H1 (cell line): ENCODE measurements at regions of chr3 and their contacts with region 1.

Region 1: DNA sequence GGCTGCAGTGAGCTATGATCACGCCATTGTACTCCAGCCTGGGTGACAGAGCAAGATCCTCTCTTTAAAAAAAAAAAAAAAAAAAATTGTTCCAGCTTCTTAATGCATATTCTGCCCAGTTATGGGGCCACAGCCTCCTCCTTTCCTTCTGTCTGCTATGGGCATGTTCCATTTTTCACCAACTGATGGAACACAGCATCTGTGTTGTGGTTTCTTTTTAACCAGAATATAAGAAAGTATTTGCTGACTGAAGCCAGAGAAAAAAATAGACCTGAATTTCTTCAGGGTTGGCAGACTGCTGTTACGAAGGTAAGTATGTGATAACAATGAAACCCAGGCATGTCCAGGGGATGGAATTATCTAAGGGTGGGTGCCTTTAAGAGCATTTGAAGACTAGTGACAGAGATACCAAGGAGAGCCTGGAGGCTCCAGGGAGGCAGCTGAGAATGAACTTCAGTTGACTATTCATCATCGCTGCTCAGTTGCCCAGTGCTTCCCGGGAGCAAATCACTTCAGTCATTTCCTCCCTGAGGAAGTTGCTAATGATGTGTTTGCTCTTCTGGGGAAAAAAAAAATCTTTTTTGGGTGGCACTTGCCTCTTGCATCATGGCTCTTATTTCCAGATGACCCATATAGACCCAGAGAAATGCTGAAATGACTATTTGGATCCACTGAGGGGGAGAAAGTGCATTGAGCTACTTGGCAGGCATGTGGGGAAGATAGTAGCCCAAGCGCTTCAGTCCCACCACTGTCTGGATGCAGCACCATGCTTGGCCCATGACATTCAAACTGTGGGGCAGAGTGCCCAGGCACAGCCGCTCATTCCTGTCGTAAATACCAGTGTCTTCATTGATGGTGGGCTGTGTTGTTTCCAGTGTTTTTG is 14.5 kb downstream of the NCBP2 start:
- DNase-seq: no peak
- H3K4me3 ChIP-seq: no peak overlapping the region
- H3K27ac ChIP-seq: no peak overlapping the region
- H3K4me1 ChIP-seq: no peaks in the 10 kb centered on the region
- H3K27me3 ChIP-seq: no peaks in the 10 kb centered on the region
- CTCF ChIP-seq: no peak
- EP300 ChIP-seq: no peak
- POLR2A ChIP-seq: no peak
- RAD21 ChIP-seq: no peak

Region 2: GRCh38 chr3:196889844-196890708 is 37.7 kb before region 1 on chr3:
- CTCF ChIA-PET with region 1: no interaction called
- POLR2A ChIA-PET with region 1: no interaction called
- DNase-seq: no peak
- H3K4me3 ChIP-seq: no peak overlapping the region
- H3K27ac ChIP-seq: no peak overlapping the region
- H3K4me1 ChIP-seq: no peaks in the 10 kb centered on the region
- H3K27me3 ChIP-seq: no peaks in the 10 kb centered on the region
- CTCF ChIP-seq: no peak
- EP300 ChIP-seq: no peak
- POLR2A ChIP-seq: no peak
- RAD21 ChIP-seq: no peak

Region 3: GRCh38 chr3:196942226-196942914 is 14.6 kb after region 1 on chr3 and contains the start of gene NCBP2:
- CTCF ChIA-PET with region 1: interaction called, 3 read pairs
- POLR2A ChIA-PET with region 1: interaction called, 11 read pairs
- DNase-seq: peak; percentile 94 to 99
- H3K4me3 ChIP-seq: peak within 1 kb of the TSS; percentile 78 to 99 (median 89)
- H3K27ac ChIP-seq: peak within 1 kb of the TSS; percentile 87
- H3K4me1 ChIP-seq: peaks cover 3 to 8% (median 4%) of the 10 kb centered on the region in 4 experiments
- H3K27me3 ChIP-seq: no peaks in the 10 kb centered on the region
- CTCF ChIP-seq: peak; percentile 74 to 84 (median 79)
- EP300 ChIP-seq: no peak
- POLR2A ChIP-seq: peak; percentile 84 to 94
- RAD21 ChIP-seq: peak; percentile 51 to 59
- total RNA-seq, gene NCBP2: 96.7 and 100 TPM in 2 replicates

Region 4: DNA sequence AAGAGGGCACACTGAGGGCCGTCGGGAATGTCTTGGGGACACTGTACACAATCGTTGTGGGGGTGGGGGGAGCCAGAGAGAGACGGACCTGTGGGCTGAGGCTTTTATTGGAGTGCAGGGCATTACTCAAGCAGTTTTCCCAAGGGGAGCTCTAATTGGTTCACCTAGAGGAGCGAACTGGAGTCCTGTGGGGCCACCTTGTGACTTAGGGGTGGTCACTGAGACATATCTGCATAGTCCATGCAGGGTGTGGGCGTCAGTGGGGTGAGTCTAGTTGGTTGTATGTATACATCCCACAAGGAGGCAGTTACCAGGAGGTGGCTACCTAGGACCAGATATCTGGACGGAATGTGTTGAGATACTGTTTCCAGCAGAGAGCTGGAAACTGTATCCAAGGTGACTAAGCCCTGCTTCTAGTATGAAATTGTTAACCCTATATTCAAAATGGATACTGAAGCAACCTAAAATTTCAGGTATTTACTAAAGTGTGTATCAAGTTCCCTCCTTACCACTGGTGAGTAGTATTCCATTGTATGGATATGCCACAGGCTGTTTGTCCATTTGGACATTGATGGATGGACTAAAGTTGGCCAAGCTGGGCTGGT is 43.4 kb after region 1 on chr3:
- CTCF ChIA-PET with region 1: no interaction called
- POLR2A ChIA-PET with region 1: no interaction called
- DNase-seq: no peak
- H3K4me3 ChIP-seq: no peak overlapping the region
- H3K27ac ChIP-seq: no peak overlapping the region
- H3K4me1 ChIP-seq: peaks cover 0 to 24% (median 10%) of the 10 kb centered on the region in 4 experiments; a peak in 5 of 7 replicates
- H3K27me3 ChIP-seq: peaks cover 49 to 54% (median 52%) of the 10 kb centered on the region in 4 experiments
- CTCF ChIP-seq: no peak
- EP300 ChIP-seq: no peak
- POLR2A ChIP-seq: no peak
- RAD21 ChIP-seq: no peak

Region 5: GRCh38 chr3:196988241-196989029 is 60.6 kb after region 1 on chr3:
- CTCF ChIA-PET with region 1: no interaction called
- POLR2A ChIA-PET with region 1: no interaction called
- DNase-seq: no peak
- H3K4me3 ChIP-seq: no peak overlapping the region
- H3K27ac ChIP-seq: no peak overlapping the region
- H3K4me1 ChIP-seq: no peaks in the 10 kb centered on the region
- H3K27me3 ChIP-seq: no peaks in the 10 kb centered on the region
- CTCF ChIP-seq: peak in 2 of 3 experiments; percentile 62 to 63; a peak in 3 of 4 replicates
- EP300 ChIP-seq: no peak
- POLR2A ChIP-seq: no peak
- RAD21 ChIP-seq: peak; percentile 44 to 54

Region 6: GRCh38 chr3:197003461-197004385 is 75.9 kb after region 1 on chr3:
- CTCF ChIA-PET with region 1: no interaction called
- POLR2A ChIA-PET with region 1: no interaction called
- DNase-seq: no peak
- H3K4me3 ChIP-seq: peak overlapping the region; percentile 25 to 79 (median 40)
- H3K27ac ChIP-seq: no peak overlapping the region
- H3K4me1 ChIP-seq: peaks cover 3 to 10% (median 6%) of the 10 kb centered on the region in 4 experiments
- H3K27me3 ChIP-seq: peaks cover 0 to 17% (median 17%) of the 10 kb centered on the region in 4 experiments; a peak in 6 of 7 replicates
- CTCF ChIP-seq: no peak
- EP300 ChIP-seq: no peak
- POLR2A ChIP-seq: no peak
- RAD21 ChIP-seq: peak in 1 of 2 experiments; percentile 1; a peak in 1 of 4 replicates